Sigmoid colon (tissue), 7 donors: ENCODE measurements at regions of chr17 and their contacts with region 1.

Region 1: DNA sequence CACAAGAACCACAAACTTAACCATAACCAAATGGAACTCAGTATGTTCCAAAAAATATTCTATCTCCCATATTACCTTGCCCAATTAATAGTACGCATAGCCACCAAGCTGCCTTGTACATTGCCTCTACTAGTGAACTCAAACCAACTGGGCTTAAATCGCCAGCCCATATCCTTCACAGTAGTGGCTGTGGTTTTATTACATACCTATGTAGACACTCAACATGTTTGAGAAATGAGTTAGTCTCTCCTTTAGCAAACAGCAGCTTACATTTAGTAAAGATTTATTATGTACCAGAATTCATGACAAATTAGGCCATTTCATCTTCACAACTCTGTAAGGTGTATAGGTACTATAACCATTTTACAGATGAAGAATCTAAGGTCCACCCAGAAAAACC is 41.4 kb downstream of the GRB2 start:
- DNase-seq: no peak
- H3K4me3 ChIP-seq: no peak overlapping the region
- H3K27ac ChIP-seq: no peak overlapping the region
- H3K4me1 ChIP-seq: peaks cover 0 to 67% (median 55%) of the 10 kb centered on the region in 4 donors
- H3K27me3 ChIP-seq: no peaks in the 10 kb centered on the region
- CTCF ChIP-seq: no peak
- EP300 ChIP-seq: no peak
- POLR2A ChIP-seq: no peak

Region 2: GRCh38 chr17:75398279-75398678 is 34.2 kb after region 1 on chr17:
- intact Hi-C with region 1: loop called (anchors 5 kb)
- DNase-seq: no peak
- H3K4me3 ChIP-seq: no peak overlapping the region
- H3K27ac ChIP-seq: no peak overlapping the region
- H3K4me1 ChIP-seq: peaks cover 0 to 44% (median 27%) of the 10 kb centered on the region in 4 donors
- H3K27me3 ChIP-seq: no peaks in the 10 kb centered on the region
- CTCF ChIP-seq: no peak
- EP300 ChIP-seq: no peak
- POLR2A ChIP-seq: no peak

Region 3: GRCh38 chr17:75515496-75516254 is 151.6 kb after region 1 on chr17 and contains the start of gene CASKIN2:
- intact Hi-C with region 1: no loop called
- DNase-seq: peak; percentile 98
- H3K4me3 ChIP-seq: peak within 1 kb of the TSS; percentile 73 to 96 (median 89)
- H3K27ac ChIP-seq: peak within 1 kb of the TSS; percentile 85 to 91 (median 90)
- H3K4me1 ChIP-seq: peaks cover 5 to 64% (median 51%) of the 10 kb centered on the region in 4 donors
- H3K27me3 ChIP-seq: no peaks in the 10 kb centered on the region
- CTCF ChIP-seq: peak; percentile 96 to 99 (median 98)
- EP300 ChIP-seq: no peak
- POLR2A ChIP-seq: no peak
- total RNA-seq, gene CASKIN2: 10.0 to 14.7 (median 10.2) TPM

Region 4: DNA sequence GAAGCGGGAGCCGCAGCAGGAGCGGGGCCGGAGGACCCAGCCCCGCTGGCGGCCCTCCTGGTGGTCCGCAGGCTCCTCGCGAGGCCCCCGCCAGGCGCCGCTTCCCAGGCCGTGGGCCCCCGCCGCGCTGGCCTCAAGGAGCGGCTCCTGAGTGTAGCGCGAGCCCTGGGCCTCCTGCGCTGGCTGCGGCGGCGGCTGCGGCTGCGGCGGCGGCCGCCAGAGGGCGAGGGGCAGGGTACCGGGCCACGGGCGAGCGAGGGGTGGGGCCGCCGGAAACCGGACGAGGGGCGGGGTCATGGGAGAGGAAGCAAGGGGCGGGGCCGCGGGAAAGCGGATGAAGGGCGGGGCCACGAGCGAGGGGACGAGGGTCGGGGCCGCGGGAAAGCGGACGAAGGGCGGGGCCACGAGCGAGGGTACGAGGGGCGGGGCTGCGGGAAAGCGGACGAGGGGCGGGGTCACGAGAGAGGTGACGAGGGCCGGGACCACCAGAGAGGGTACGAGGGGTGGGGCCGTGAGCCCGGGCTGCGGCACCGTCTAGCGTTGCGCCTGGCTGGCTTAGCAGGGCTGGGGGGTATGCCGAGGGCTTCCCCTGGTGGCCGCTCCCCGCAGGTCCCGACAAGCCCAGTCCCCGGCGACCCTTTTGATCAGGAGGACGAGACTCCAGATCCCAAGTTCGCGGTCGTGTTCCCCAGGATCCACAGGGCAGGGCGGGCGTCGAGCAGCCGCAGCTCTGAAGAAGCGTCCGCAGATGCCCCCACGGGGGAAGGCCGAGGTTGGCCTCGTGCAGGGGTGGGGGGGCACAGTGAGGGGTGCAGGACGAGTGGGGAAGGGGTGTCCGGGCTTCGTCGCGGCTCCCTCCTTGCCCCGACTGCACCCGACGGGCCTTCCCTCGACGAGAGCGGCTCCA is 225.2 kb after region 1 on chr17:
- intact Hi-C with region 1: no loop called
- DNase-seq: peak; percentile 95
- H3K4me3 ChIP-seq: peak overlapping the region; percentile 52 to 69 (median 67)
- H3K27ac ChIP-seq: peak overlapping the region; percentile 80 to 94 (median 88)
- H3K4me1 ChIP-seq: peaks cover 3 to 22% (median 12%) of the 10 kb centered on the region in 4 donors
- H3K27me3 ChIP-seq: peaks cover 0 to 5% (median 0%) of the 10 kb centered on the region in 3 donors
- CTCF ChIP-seq: peak; percentile 5 to 74 (median 30)
- EP300 ChIP-seq: no peak
- POLR2A ChIP-seq: no peak